Prostate gland (tissue), 2 donors: ENCODE measurements at regions of chr17 and their contacts with region 1.

Region 1: DNA sequence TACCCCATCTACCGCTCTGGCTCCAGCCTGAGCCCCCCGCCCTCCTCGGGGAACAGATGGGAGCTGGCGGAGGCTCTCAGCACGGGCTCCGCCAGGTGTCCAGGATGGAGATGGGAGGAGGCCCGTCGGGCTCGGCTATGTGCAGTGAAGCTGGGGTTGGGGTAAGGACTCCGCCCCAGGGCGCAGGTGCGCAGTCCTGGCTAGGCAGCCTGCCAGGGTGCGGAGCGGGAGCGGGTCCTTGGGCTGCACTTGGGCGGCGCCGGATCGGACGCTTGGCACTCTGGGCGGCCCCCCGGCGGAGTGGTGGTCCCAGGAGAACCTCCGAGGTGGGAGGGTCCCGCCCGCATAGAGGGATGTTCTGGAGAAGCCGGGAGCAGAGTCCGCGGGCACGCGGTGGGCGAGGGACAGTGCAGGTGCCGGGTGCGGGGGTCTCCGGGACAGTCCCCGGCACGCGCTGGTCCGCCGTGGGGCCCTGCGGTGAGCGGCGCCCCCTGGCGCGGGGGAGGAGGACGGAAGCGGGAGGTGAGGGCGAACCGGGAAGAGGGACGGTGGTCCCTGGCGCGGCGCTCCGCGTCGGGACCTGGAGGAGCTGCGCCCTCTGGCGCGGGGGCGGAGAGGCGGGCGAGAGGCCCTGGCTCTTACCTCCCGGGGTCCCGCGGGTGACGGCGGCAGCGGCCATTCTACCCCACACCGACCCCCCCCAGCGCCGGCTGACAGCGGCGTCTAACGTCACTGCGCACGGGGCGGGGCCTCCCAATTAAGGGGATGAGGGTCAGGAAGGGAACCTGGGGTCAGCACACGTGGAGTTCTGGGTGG is at the start of gene CAMTA2:
- DNase-seq: peak; percentile 84
- H3K4me3 ChIP-seq: peak within 1 kb of the TSS; percentile 56 to 95
- H3K27ac ChIP-seq: peak within 1 kb of the TSS; percentile 88 to 96
- H3K4me1 ChIP-seq: peaks cover 18% of the 10 kb centered on the region
- H3K27me3 ChIP-seq: no peaks in the 10 kb centered on the region
- CTCF ChIP-seq: peak; percentile 64 to 92 (median 76)
- POLR2A ChIP-seq: peak; percentile 70
- total RNA-seq, gene CAMTA2: 13.6 to 40.2 TPM

Region 2: GRCh38 chr17:4895657-4896331 is 91.4 kb before region 1 on chr17:
- intact Hi-C with region 1: no loop called
- DNase-seq: no peak
- H3K4me3 ChIP-seq: no peak overlapping the region
- H3K27ac ChIP-seq: no peak overlapping the region
- H3K4me1 ChIP-seq: no peaks in the 10 kb centered on the region
- H3K27me3 ChIP-seq: no peaks in the 10 kb centered on the region
- CTCF ChIP-seq: no peak
- POLR2A ChIP-seq: no peak

Region 3: DNA sequence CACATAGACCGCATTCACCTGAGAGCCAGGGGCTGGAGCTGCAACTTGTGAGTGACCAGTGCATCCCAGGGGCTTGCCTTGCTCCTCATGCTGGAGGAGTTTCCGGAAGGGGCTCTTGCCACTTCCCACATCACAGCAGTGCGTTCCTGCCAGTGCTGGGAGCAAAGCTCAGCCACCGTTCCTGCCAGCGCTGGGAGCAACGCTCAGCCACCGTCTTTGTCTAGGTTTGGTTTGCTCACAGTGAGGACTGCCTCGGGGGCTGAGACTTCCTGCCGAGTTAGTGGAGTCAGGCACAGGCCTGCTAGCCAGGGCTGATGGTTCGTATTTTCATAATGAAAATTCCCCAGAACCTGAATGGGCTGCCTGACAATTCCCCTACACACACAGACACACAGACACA is 78.9 kb before region 1 on chr17:
- intact Hi-C with region 1: loop called (anchors 5 kb)
- DNase-seq: no peak
- H3K4me3 ChIP-seq: no peak overlapping the region
- H3K27ac ChIP-seq: peak overlapping the region; percentile 51 to 62
- H3K4me1 ChIP-seq: peaks cover 3% of the 10 kb centered on the region
- H3K27me3 ChIP-seq: no peaks in the 10 kb centered on the region
- CTCF ChIP-seq: no peak
- POLR2A ChIP-seq: no peak